B cell (primary cell): ENCODE measurements at regions of chr16 and their contacts with region 1.

Region 1: DNA sequence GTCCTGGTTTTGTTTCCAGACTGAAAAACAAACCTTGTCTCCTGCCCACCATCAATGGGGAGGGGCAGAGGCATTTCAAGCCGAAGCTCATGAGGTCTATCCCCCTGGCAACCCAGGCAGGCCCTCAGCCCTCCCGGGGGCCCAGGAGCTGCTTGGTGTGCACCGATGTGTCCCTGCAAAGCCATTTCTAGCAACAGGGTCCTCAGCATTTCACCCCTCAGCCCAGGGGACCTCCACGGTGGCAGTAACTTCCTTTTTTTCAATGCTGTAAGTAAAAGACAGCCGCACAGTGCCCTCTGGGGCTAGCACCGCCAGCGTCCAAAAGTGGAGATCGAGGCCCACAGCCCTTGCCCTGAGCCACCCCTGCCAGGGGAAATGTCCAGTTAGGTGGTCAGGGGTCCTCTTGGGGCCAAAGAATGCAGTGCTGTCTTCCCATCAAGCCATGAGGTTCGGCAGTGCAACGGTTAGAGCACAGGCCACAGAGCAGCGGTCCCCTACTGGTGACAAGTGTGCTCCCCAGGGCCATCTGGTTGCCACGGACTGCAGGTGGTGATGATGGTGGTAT is 79.9 kb downstream of the LITAF start:
- DNase-seq: peak; percentile 71
- ATAC-seq: peak; percentile 83
- H3K4me3 ChIP-seq: peak overlapping the region in 4 of 5 experiments; percentile 24 to 49 (median 41)
- H3K4me3 Mint-ChIP-seq: peak overlapping the region; percentile 86
- H3K27ac ChIP-seq: peak overlapping the region; percentile 26 to 48
- H3K27ac Mint-ChIP-seq: peak overlapping the region; percentile 83
- H3K4me1 ChIP-seq: peaks cover 8 to 13% of the 10 kb centered on the region in 2 donors
- H3K4me1 Mint-ChIP-seq: peaks cover 15% of the 10 kb centered on the region
- H3K27me3 ChIP-seq: no peaks in the 10 kb centered on the region
- H3K27me3 Mint-ChIP-seq: no peaks in the 10 kb centered on the region
- CTCF ChIP-seq: peak; percentile 46

Region 2: GRCh38 chr16:11475896-11476630 is 30.8 kb before region 1 on chr16:
- CTCF ChIA-PET with region 1: interaction called, 3 read pairs
- POLR2A ChIA-PET with region 1: interaction called, 10 read pairs
- intact Hi-C with region 1: no loop called
- DNase-seq: no peak
- ATAC-seq: no peak
- H3K4me3 ChIP-seq: no peak overlapping the region
- H3K4me3 Mint-ChIP-seq: no peak overlapping the region
- H3K27ac ChIP-seq: no peak overlapping the region
- H3K27ac Mint-ChIP-seq: no peak overlapping the region
- H3K4me1 ChIP-seq: no peaks in the 10 kb centered on the region
- H3K4me1 Mint-ChIP-seq: no peaks in the 10 kb centered on the region
- H3K27me3 ChIP-seq: no peaks in the 10 kb centered on the region
- H3K27me3 Mint-ChIP-seq: no peaks in the 10 kb centered on the region
- CTCF ChIP-seq: no peak